SK-N-SH (cell line): ENCODE measurements at regions of chr9 and their contacts with region 1.

Region 1: DNA sequence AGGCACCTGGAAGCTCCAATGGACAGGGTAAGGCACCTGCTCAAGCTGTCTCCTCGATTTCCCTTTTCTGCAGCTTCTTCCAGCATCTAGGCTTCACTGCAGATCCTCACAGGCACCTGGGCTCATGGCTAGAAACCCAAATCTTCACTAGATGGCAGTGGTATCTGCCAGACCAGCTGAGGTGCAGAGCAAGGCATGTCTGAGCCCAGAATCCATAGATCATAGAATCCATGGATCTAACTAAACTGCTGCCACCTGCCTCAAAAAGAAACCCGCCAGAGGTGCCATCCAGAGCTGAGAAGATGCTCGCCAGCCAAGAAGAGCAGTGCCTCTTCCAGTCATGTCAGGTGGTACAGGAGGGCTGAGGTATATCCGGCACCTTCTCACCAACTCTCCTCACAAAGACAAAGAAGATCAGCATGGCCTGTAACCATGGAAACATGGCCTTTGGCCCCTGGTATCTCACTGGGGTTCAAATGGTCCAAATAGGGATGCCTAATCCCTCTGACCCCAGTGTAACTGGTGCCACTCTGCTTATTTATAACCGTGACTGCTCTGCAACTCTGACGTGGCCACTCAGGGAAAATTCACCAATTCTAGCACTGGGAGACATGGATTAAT is 6.8 kb downstream of the SHC3 start:
- DNase-seq: no peak
- H3K4me3 ChIP-seq: no peak overlapping the region
- H3K27ac ChIP-seq: no peak overlapping the region
- H3K4me1 ChIP-seq: peaks cover 14 to 18% of the 10 kb centered on the region in 2 experiments; a peak in 2 of 4 replicates
- H3K27me3 ChIP-seq: no peaks in the 10 kb centered on the region
- CTCF ChIP-seq: 0 out of 2 replicates have a peak, but pooled peaks have one; percentile 12
- EP300 ChIP-seq: no peak
- RAD21 ChIP-seq: peak; percentile 55

Region 2: DNA sequence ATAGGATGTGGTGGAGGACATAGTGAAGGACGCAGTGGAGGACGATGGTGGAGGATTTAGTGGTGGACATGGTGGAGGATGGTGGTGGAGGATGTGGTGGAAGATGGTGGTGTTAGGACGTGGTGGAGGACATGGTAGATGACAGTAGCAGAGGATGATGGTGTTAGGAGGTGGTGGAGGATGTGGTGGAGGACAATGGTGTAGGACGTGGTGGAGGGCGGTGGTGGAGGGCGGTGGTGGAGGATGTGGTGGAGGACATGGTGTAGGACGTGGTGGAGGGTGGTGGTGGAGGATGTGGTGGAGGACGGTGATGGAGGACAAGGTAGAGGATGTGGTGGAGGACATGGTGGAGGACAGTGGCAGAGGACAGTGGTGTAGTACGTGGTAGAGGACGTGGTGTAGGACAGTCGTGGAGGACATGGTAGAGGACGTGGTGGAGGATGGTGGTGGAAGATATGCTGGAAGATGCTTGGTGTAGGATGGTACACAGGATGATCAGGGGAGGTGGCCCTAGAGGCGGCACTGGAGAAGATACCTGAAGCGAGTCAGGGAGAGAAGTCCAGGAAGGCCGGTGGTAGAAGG is 111.8 kb before region 1 on chr9:
- CTCF ChIA-PET with region 1: no interaction called
- POLR2A ChIA-PET with region 1: no interaction called
- DNase-seq: no peak
- H3K4me3 ChIP-seq: no peak overlapping the region
- H3K27ac ChIP-seq: no peak overlapping the region
- H3K4me1 ChIP-seq: no peaks in the 10 kb centered on the region
- H3K27me3 ChIP-seq: no peaks in the 10 kb centered on the region
- CTCF ChIP-seq: no peak
- EP300 ChIP-seq: no peak
- RAD21 ChIP-seq: no peak

Region 3: DNA sequence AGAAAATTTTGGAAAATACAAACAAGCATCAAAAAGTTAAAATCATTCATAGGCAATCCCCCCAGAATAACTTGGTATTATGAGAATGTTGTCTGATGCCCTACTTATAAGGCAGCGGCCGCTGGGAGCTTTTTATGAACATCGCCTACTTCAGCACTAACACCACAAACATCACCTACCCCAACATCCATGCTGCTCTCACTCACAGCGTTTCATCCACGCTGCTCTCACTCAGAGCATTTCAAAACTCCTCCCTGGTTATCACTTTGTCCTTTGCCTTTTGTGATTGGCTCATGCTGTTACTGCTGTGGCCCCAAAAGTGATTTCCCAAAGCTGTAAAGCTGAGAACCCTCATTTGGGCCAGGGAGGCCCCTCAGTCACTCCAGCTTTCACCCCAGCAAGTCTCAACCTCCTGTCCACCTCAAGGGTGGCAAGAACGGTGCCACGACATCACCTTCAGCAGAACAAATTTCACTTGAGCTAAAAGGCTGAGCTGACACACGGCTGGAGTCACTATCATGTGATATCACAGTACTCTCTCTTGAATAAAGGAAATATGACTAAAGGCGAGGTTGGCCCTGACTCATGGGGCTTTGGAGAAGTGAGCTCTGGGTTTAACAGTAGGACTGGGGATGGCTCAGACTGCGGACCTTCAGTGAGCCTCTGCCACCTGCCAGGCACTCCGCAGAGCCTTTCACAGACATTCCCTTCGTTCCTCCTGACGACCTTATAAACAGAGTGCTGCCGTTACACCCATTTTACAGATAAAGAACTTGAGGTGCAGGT is 18.4 kb before region 1 on chr9:
- CTCF ChIA-PET with region 1: no interaction called
- POLR2A ChIA-PET with region 1: no interaction called
- DNase-seq: no peak
- H3K4me3 ChIP-seq: peak overlapping the region in 1 of 2 experiments; percentile 31; a peak in 1 of 4 replicates
- H3K27ac ChIP-seq: peak overlapping the region in 1 of 2 experiments; percentile 96; a peak in 3 of 4 replicates
- H3K4me1 ChIP-seq: peaks cover 3 to 23% of the 10 kb centered on the region in 2 experiments
- H3K27me3 ChIP-seq: no peaks in the 10 kb centered on the region
- CTCF ChIP-seq: no peak
- EP300 ChIP-seq: peak in 1 of 2 experiments; percentile 59; a peak in 1 of 4 replicates
- RAD21 ChIP-seq: no peak

Region 4: GRCh38 chr9:89278997-89279739 is 107.4 kb after region 1 on chr9:
- CTCF ChIA-PET with region 1: interaction called, 64 read pairs
- POLR2A ChIA-PET with region 1: no interaction called
- DNase-seq: peak; percentile 68
- H3K4me3 ChIP-seq: no peak overlapping the region
- H3K27ac ChIP-seq: no peak overlapping the region
- H3K4me1 ChIP-seq: no peaks in the 10 kb centered on the region
- H3K27me3 ChIP-seq: no peaks in the 10 kb centered on the region
- CTCF ChIP-seq: peak; percentile 90
- EP300 ChIP-seq: no peak
- RAD21 ChIP-seq: peak; percentile 90